Motor neuron (in vitro differentiated cells): ENCODE measurements at regions of chr13 and their contacts with region 1.

Region 1: GRCh38 chr13:96822895-96823294 is 171.4 kb downstream of the OXGR1 start:
- ATAC-seq: peak in 6 of 8 experiments; percentile 23 to 90 (median 67)
- H3K4me3 ChIP-seq: no peak overlapping the region
- H3K27ac ChIP-seq: no peak overlapping the region
- H3K4me1 ChIP-seq: no peaks in the 10 kb centered on the region

Region 2: DNA sequence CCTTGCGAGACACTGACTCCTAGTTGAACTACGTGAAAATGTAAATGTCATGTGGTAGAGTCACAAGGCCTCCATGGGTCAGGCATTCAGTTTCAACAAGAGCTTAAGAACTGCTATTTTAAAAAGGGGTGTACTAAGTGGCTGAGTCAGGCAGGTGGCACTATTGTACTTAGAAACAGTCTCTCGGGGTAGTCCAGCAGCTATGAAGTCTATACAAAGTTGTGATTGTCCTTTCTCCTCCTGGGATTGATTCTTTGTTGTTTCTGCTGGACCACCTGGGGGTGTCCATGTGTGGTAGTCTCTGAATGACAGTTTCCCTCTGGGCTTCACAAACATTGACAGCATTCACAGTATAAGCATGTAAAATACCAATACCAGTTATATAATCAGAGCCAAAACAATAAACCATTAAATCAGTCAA is 802.7 kb before region 1 on chr13:
- in situ Hi-C with region 1: loop called in 2 of 9 experiments (anchors 25 kb)
- ATAC-seq: peak; percentile 23 to 100 (median 70)
- H3K4me3 ChIP-seq: no peak overlapping the region
- H3K27ac ChIP-seq: no peak overlapping the region
- H3K4me1 ChIP-seq: no peaks in the 10 kb centered on the region

Region 3: GRCh38 chr13:96025283-96025682 is 797.6 kb before region 1 on chr13:
- in situ Hi-C with region 1: loop called in 2 of 9 experiments (anchors 25 kb)
- ATAC-seq: no peak
- H3K4me3 ChIP-seq: no peak overlapping the region
- H3K27ac ChIP-seq: no peak overlapping the region
- H3K4me1 ChIP-seq: no peaks in the 10 kb centered on the region

Region 4: GRCh38 chr13:96141027-96141426 is 681.9 kb before region 1 on chr13:
- in situ Hi-C with region 1: loop called in 2 of 9 experiments (anchors 25 kb)
- ATAC-seq: peak in 2 of 8 experiments; percentile 24 to 33
- H3K4me3 ChIP-seq: no peak overlapping the region
- H3K27ac ChIP-seq: no peak overlapping the region
- H3K4me1 ChIP-seq: no peaks in the 10 kb centered on the region